CD4-positive, alpha-beta T cell (primary cell): ENCODE measurements at regions of chr5 and their contacts with region 1.

Region 1: GRCh38 chr5:62305715-62306322 is at the start of gene KIF2A:
- DNase-seq: peak; percentile 80 to 97 (median 90)
- ATAC-seq: peak; percentile 80
- H3K4me3 ChIP-seq: peak within 1 kb of the TSS; percentile 78
- H3K4me3 Mint-ChIP-seq: peak within 1 kb of the TSS; percentile 93
- H3K27ac ChIP-seq: peak within 1 kb of the TSS; percentile 84 to 86
- H3K27ac Mint-ChIP-seq: peak within 1 kb of the TSS; percentile 94
- H3K4me1 ChIP-seq: peaks cover 33% of the 10 kb centered on the region
- H3K4me1 Mint-ChIP-seq: peaks cover 54% of the 10 kb centered on the region
- H3K27me3 ChIP-seq: no peaks in the 10 kb centered on the region
- H3K27me3 Mint-ChIP-seq: no peaks in the 10 kb centered on the region
- CTCF ChIP-seq: no peak
- total RNA-seq, gene KIF2A: 78.4 to 81.8 TPM

Region 2: DNA sequence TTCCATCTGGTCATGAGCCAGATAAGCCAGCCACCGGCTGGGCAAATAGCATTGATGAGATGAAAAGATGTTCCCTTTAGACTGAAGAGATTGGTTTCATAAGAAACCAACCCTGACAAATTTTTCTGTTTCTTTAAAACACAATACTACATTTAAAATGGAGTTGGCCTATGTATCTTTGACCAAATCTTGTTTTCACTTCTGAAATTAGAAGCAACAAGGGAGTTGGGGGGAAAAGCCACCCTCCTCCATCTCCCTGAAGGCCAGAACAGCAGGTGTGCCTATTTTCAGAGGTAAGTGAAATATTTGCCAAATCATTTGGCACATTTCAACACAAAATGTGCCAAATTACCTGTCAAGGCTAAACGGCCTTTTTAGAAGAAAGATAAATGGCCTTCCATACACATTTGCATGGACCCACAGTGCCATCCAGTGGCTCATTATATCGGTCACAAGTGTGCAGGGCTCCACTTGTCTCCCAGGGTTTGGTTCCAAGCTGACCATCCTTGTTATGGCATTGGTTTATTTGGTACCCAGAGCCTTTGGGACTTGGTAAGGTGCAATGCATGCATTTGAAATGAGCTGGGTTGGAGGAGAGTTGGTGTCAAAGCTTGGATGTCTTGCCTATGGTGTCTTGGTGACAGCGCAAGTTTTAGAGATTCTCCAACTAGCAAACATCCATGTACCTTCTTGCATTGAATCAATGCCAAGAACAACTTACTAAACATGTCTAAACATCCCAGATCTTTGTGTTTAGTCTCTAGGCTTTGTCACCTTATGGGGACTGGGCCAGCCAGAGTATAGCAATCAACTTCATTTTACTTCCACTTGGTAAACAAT is 371.8 kb before region 1 on chr5:
- CTCF ChIA-PET with region 1: no interaction called
- POLR2A ChIA-PET with region 1: no interaction called
- intact Hi-C with region 1: no loop called
- DNase-seq: peak in 1 of 14 experiments; percentile 4
- ATAC-seq: no peak
- H3K4me3 ChIP-seq: no peak overlapping the region
- H3K4me3 Mint-ChIP-seq: no peak overlapping the region
- H3K27ac ChIP-seq: no peak overlapping the region
- H3K27ac Mint-ChIP-seq: no peak overlapping the region
- H3K4me1 ChIP-seq: no peaks in the 10 kb centered on the region
- H3K4me1 Mint-ChIP-seq: no peaks in the 10 kb centered on the region
- H3K27me3 ChIP-seq: no peaks in the 10 kb centered on the region
- H3K27me3 Mint-ChIP-seq: peaks cover 4% of the 10 kb centered on the region
- CTCF ChIP-seq: no peak

Region 3: DNA sequence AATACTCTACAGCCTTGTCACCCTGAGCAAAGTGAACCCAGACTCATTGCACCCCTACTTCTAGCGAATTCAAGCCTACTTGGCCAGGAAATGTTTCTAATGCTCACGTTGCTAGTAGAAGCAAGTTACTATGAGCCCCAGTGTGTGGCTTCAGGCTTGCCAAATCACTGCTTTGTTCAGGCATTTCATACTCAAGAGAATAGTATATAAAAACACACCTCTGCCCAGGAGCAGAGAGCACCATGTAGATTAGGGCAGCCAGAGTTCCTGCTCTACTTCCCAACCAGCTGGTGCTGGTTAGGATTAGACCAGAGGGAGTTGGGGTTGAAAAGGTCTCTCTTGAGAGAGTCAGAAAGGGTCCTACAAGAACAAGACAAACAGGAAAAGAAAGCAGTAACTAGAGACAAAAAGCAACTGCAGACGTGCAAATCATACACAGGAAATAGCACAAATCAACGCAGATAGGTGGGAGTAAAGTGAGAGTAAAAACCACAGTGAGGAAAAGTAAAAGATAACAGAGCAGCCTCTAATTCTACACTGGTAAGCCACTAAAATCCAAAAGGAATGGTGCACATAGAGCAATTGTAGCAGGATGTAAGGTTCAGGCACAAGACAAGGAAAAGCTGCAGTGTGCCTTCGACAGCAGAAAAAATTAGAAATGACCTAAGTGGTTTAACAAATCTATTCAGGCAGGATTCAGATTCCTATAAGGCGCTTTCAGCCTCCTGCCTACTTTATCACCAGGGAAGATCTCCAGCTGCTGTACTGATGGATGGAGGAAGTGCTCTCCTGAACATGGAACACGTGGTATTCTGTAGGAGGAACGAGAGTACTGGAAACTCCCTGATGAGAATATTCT is 49.4 kb before region 1 on chr5:
- CTCF ChIA-PET with region 1: no interaction called
- POLR2A ChIA-PET with region 1: interaction called, 12 read pairs
- intact Hi-C with region 1: loop called in 1 of 2 experiments (anchors 5 kb)
- DNase-seq: peak in 10 of 14 experiments; percentile 1 to 73 (median 14)
- ATAC-seq: peak; percentile 87
- H3K4me3 ChIP-seq: peak overlapping the region; percentile 34
- H3K4me3 Mint-ChIP-seq: peak overlapping the region; percentile 66
- H3K27ac ChIP-seq: peak overlapping the region; percentile 63 to 66
- H3K27ac Mint-ChIP-seq: peak overlapping the region; percentile 92
- H3K4me1 ChIP-seq: peaks cover 33% of the 10 kb centered on the region
- H3K4me1 Mint-ChIP-seq: peaks cover 86% of the 10 kb centered on the region
- H3K27me3 ChIP-seq: no peaks in the 10 kb centered on the region
- H3K27me3 Mint-ChIP-seq: no peaks in the 10 kb centered on the region
- CTCF ChIP-seq: no peak

Region 4: DNA sequence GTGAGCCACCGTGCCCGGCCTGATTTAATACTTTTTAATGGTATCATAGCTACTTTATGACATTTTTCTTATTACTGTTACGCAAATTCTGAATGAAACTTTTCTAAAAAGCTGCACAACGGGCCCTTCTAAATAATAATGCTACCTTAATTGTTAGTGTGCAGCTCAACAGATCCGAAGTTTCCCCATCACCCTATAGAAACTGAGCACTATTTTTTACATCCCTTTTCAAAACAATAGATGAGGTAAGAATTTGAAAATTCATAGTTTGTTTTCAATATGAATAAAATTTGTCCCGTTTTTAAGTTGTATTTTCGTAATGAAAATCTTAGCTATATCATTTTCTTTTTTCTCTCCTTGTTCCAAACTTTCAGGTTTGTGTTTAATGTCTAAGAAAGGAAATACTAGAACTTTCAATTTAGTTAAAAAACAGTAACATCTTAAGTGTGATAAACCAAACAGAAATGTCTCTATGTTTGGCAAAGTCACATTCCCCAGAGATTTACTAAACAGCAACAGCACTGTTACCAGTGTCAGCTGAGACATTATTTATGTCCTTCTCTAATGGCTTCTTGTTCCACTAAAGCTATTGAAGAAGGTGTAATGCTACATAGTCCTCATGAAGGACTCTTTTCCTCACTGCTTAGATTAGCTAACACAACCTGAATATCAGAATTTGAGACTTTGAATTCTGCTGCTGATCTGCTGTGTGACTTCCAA is 23.1 kb after region 1 on chr5:
- CTCF ChIA-PET with region 1: interaction called, 3 read pairs
- POLR2A ChIA-PET with region 1: interaction called, 10 read pairs
- intact Hi-C with region 1: no loop called
- DNase-seq: no peak
- ATAC-seq: no peak
- H3K4me3 ChIP-seq: no peak overlapping the region
- H3K4me3 Mint-ChIP-seq: peak overlapping the region; percentile 42
- H3K27ac ChIP-seq: no peak overlapping the region
- H3K27ac Mint-ChIP-seq: peak overlapping the region; percentile 70
- H3K4me1 ChIP-seq: peaks cover 24% of the 10 kb centered on the region
- H3K4me1 Mint-ChIP-seq: peaks cover 86% of the 10 kb centered on the region
- H3K27me3 ChIP-seq: no peaks in the 10 kb centered on the region
- H3K27me3 Mint-ChIP-seq: no peaks in the 10 kb centered on the region
- CTCF ChIP-seq: no peak

Region 5: DNA sequence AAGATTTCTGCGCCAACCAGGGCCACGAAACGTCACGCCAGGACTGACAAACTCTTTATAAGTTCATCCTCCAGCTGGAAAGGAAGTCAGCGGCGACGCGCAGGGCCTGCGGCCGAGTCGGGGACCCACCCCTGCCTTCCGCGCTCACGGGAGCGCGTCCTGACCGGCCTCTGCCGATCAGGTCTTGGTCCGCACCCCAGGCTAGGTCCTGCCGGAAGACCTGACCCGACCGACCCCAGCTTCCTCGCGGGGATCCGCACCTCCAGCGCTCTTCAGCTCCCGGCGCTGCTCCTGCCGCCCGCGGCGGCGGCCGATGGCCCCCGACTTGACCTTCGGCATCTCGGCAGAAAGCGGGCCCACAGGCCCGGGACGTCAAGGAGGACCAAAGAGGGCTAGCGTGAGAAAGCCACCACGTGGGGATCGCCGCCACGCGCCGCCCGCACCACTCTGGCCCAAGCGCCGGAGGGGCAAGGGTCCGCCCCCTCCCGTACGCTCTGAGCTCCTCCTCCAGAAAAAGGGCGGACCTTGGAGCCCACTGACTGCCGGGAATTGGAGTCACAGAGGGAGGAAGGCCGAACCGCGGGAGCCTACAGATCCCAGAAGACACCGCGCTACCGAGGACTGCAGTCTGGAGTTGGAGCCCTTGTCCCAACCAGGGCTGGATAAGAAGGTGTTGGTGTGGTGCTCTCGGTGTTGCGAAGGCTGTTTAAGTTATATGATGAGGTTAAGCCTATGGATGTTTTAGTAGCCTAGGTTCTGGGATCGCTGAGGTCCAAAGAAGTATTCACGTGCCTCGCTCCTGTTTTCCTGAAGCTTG is 97.8 kb after region 1 on chr5 and contains the start of gene DIMT1:
- CTCF ChIA-PET with region 1: no interaction called
- POLR2A ChIA-PET with region 1: interaction called, 31 read pairs
- intact Hi-C with region 1: loop called (anchors 2 to 5 kb)
- DNase-seq: peak; percentile 83 to 96 (median 88)
- ATAC-seq: peak; percentile 97
- H3K4me3 ChIP-seq: peak within 1 kb of the TSS; percentile 95
- H3K4me3 Mint-ChIP-seq: peak within 1 kb of the TSS; percentile 97
- H3K27ac ChIP-seq: peak within 1 kb of the TSS; percentile 91 to 96
- H3K27ac Mint-ChIP-seq: peak within 1 kb of the TSS; percentile 89
- H3K4me1 ChIP-seq: peaks cover 4% of the 10 kb centered on the region
- H3K4me1 Mint-ChIP-seq: peaks cover 31% of the 10 kb centered on the region
- H3K27me3 ChIP-seq: no peaks in the 10 kb centered on the region
- H3K27me3 Mint-ChIP-seq: no peaks in the 10 kb centered on the region
- CTCF ChIP-seq: no peak
- total RNA-seq, gene DIMT1: 19.9 to 20.5 TPM